ENCODE measurements at regions of chr2 and their contacts with region 1.

Region 1: DNA sequence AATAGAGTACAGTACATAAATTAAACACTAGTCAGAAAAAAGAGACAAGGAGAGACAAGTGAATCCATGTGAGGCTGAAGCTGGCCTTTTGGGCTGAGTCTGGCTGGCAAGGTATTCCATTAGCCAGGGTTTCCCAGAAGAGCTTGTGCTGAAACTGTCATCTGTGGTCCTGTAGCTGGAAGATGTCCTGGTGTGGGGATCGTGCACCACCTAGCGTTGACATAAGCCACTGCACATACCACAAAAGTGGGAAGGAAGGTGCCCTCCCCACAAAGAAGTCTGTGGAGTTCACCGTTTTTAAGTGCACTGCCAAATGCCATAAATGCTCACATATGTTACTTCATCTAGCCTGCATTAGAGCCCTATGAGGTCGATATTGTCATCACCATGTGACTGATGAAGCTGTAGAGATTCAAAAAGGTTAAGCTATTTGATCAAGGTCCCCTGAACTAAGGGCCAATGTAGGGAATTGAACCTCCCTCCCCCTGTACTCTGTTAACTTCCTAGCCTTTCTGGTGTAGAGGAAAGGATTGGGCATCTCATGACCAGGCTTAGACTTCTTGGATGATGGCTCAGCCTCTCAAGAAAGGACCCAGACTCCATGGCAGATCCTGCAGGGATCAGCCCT is 31.9 kb upstream of the GALNT14 start:
- DNase-seq: peak; percentile 78
- H3K4me3 ChIP-seq: no peak overlapping the region
- H3K27ac ChIP-seq: no peak overlapping the region
- H3K4me1 ChIP-seq: peaks cover 27% of the 10 kb centered on the region
- CTCF ChIP-seq: peak; percentile 99

Region 2: DNA sequence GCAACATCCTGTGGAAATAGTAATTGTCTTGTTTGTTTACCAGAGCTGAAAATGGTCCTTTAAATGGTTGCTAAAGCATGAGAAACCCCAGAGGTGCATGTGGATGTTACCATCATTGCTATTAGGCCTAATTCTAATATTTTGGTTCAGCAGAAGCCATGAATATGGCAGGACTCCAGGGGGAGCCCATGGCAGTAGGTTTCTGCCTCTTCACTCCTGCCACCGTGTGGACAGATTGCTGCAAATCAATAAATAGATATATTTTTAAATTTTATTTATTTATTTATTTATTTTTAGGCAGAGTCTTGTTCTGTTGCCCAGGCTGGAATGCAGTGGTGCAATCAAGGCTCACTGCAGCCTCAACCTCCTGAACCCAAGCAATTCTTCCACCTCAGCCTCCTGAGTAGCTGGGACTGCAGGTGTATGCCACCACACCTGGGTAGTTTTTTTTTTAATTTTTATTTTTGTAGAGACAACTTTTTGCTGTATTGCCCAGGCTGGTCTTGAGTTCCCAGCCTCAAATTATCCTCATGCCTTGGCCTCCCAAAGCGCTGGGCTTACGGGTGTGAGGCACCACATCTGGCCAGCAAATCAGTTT is 308.0 kb before region 1 on chr2:
- CTCF ChIA-PET with region 1: interaction called, 10 read pairs
- POLR2A ChIA-PET with region 1: interaction called, 3 read pairs
- intact Hi-C with region 1: loop called (anchors 1 kb)
- DNase-seq: peak; percentile 79
- H3K4me3 ChIP-seq: no peak overlapping the region
- H3K27ac ChIP-seq: no peak overlapping the region
- H3K4me1 ChIP-seq: peaks cover 23% of the 10 kb centered on the region
- CTCF ChIP-seq: peak; percentile 88

Region 3: DNA sequence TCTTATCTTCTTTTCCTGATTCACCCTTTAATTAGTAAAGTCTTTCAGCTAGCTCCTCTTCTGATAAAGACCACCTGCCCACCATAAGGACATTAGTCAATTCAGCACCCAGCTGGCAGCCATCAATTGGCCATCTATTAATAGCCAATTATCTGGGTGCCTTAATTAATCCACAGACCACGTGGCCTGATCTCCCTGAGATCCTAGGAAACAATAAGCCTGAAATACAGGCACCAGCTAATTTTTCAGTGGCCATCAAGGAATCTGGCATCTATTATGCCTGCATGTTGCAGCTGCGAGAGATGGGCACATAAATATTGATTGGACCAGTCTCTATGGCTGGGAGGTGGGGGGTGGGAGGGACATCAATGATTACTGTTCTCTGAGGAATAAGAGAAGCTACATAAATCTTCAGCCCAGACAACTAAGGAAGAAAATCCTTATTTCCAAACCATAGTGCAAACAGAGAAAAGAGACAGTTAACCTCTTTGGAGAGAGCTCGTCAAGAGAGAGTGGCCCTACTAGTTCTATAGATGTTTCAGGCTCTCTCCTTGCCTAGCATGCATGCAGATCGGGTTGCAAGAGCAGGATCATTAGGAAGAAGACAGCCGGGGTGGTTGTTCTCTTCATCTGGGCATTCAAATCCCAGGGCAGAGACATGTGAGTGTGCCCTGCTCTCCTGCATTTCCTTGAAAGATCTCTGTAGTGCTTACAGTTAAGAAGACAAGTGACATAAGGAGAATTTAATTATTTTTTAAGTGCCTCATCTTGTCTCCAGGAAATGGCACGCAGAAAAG is 40.6 kb before region 1 on chr2:
- CTCF ChIA-PET with region 1: no interaction called
- POLR2A ChIA-PET with region 1: no interaction called
- intact Hi-C with region 1: no loop called
- DNase-seq: no peak
- H3K4me3 ChIP-seq: no peak overlapping the region
- H3K27ac ChIP-seq: no peak overlapping the region
- H3K4me1 ChIP-seq: peaks cover 4% of the 10 kb centered on the region
- CTCF ChIP-seq: no peak

Region 4: DNA sequence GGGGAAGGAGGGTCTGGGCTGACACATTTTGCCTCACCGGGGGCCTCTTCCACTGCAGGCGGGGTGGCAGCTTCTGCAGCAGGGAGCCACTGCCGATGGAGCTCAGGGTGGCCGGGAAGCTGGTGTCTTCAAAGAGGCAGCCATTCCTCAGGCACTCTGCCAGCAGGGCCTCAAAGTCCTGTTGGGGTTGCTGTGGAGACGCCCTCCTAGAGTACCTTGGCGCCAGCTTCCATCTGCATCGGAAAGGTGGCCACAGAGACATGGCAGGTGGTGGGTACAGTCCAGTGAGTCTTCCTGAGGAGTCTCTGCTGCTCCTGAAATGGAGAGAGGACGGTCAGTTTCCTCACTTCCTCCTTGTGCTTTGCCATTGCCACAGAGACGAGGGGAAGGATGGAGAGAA is 35.0 kb after region 1 on chr2:
- CTCF ChIA-PET with region 1: no interaction called
- POLR2A ChIA-PET with region 1: no interaction called
- intact Hi-C with region 1: no loop called
- DNase-seq: no peak
- H3K4me3 ChIP-seq: no peak overlapping the region
- H3K27ac ChIP-seq: no peak overlapping the region
- H3K4me1 ChIP-seq: peaks cover 17% of the 10 kb centered on the region
- CTCF ChIP-seq: no peak

Measured in OCI-LY7 (cell line).